Calu3 (cell line): ENCODE measurements at regions of chr3 and their contacts with region 1.

Region 1: DNA sequence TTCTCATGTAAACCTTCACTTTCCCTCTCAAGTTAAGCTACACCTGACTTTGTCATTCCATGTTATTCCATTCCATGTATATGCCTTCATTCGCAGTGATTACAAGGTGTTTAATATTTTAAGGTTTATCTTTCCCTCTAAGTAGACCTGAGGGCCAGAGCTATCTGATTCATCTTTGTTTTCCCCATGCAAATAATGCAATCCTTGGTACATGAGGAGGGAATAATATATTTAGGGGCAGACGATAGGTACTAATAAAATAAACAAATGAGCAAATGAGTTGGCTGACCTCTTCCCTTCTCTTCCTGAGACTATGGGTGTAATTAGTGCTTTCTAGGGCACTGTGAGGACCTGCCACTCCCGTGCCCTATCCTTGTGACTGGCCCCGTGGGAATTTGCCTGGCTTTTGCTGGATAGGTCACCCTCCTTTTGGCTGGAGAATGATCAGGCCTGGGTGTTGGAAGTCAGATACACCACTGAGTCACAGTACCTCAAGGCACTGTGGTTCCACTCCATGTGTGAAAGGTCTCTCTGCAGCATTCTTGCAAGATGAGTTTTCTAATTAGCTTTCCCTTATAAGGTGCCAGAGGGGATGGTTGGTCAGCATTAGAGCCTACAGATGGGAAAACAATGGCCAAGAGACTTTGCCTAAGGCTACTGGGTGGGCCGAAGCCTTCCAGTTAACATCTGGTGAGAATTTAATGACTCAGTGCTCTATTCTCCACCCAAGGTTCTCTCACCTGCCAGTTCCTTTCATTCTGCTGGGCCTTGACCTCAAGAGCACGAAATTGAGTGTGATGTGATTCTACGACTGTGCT is 183.2 kb downstream of the P3H2 start:
- DNase-seq: peak; percentile 84
- H3K4me3 Mint-ChIP-seq: peak overlapping the region; percentile 16
- H3K27ac Mint-ChIP-seq: peak overlapping the region; percentile 85
- H3K4me1 Mint-ChIP-seq: peaks cover 57% of the 10 kb centered on the region
- H3K27me3 Mint-ChIP-seq: no peaks in the 10 kb centered on the region
- CTCF ChIP-seq: no peak

Region 2: GRCh38 chr3:189605717-189606116 is 331.8 kb before region 1 on chr3:
- CTCF ChIA-PET with region 1: interaction called, 10 read pairs
- intact Hi-C with region 1: no loop called
- DNase-seq: no peak
- H3K4me3 Mint-ChIP-seq: no peak overlapping the region
- H3K27ac Mint-ChIP-seq: no peak overlapping the region
- H3K4me1 Mint-ChIP-seq: no peaks in the 10 kb centered on the region
- H3K27me3 Mint-ChIP-seq: no peaks in the 10 kb centered on the region
- CTCF ChIP-seq: no peak

Region 3: DNA sequence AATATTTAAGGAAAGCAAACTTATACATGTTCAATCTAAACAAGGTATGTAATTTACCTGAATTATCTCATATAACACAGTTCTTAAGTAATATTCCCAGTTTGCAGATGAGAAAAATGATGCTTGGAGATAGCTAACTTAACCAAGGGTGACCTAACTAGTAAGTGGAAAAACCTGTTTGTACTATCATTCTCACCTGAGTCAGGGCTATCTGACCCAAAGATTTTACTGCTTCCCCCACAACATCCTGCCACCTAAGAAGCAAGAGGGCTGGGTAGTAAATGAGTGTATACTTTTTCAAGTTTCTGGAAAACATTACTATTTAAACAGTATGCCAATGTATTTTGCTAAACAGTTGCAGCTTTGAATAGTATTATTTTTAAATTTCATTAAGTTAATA is 295.7 kb before region 1 on chr3:
- CTCF ChIA-PET with region 1: no interaction called
- intact Hi-C with region 1: loop called (anchors 5 kb)
- DNase-seq: no peak
- H3K4me3 Mint-ChIP-seq: no peak overlapping the region
- H3K27ac Mint-ChIP-seq: no peak overlapping the region
- H3K4me1 Mint-ChIP-seq: no peaks in the 10 kb centered on the region
- H3K27me3 Mint-ChIP-seq: no peaks in the 10 kb centered on the region
- CTCF ChIP-seq: no peak

Region 4: GRCh38 chr3:189710620-189711402 is 226.7 kb before region 1 on chr3:
- CTCF ChIA-PET with region 1: no interaction called
- intact Hi-C with region 1: loop called (anchors 2 kb)
- DNase-seq: peak; percentile 72
- H3K4me3 Mint-ChIP-seq: no peak overlapping the region
- H3K27ac Mint-ChIP-seq: peak overlapping the region; percentile 42
- H3K4me1 Mint-ChIP-seq: peaks cover 40% of the 10 kb centered on the region
- H3K27me3 Mint-ChIP-seq: no peaks in the 10 kb centered on the region
- CTCF ChIP-seq: no peak

Region 5: DNA sequence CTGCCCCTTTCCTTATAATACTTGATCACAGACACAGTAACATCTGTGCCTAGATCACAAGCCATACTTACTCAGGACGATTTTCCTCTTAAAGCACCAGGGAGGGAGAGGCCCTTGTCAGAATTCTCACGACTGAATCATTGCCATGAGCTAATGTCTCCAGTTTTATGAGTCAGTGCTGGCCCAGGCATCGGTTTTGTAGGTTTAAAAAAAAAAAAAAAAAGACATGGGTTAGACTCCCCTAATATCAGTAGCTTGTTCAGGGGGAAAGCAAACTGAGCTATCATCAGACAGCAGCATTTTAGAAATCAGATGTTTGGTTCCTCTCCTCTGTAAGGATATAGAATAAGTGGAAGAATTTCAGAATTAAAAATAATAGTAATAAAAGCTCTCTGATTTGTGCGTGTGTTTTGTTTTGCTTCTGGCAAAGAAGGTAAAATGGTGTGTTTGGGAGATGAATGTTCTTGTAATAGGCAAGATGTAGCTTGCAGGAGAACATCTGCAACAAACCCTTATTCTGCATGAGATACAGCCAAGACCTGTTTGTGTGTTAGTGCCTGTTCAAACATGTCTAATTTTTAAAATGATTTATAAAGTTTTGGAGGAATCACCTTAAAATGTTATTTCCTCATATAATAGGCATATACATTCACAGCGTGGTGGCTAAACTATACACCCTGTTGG is 112.7 kb before region 1 on chr3:
- CTCF ChIA-PET with region 1: interaction called, 4 read pairs
- intact Hi-C with region 1: loop called (anchors 5 kb)
- DNase-seq: peak; percentile 44
- H3K4me3 Mint-ChIP-seq: no peak overlapping the region
- H3K27ac Mint-ChIP-seq: peak overlapping the region; percentile 25
- H3K4me1 Mint-ChIP-seq: peaks cover 53% of the 10 kb centered on the region
- H3K27me3 Mint-ChIP-seq: no peaks in the 10 kb centered on the region
- CTCF ChIP-seq: no peak

Region 6: DNA sequence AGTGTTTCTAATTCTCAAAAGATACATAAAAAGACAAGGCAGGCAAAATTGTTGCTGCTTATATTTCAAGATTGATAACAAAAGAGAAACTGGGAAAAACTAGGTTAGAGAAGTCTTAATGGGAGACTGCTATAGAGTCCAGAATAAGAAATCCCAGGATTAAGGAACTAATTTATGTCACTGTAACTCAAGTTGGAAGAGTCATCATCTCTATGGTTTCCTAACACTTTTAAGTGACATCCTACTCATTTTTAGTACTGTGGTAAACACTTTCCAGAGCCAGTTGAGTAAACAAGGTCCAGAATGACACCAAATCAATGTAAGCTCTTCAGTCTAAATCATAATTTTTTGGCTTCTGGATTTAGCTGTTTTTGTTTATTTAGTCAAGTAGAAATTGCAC is 458.5 kb after region 1 on chr3:
- CTCF ChIA-PET with region 1: interaction called, 10 read pairs
- intact Hi-C with region 1: no loop called
- DNase-seq: no peak
- H3K4me3 Mint-ChIP-seq: no peak overlapping the region
- H3K27ac Mint-ChIP-seq: no peak overlapping the region
- H3K4me1 Mint-ChIP-seq: no peaks in the 10 kb centered on the region
- H3K27me3 Mint-ChIP-seq: no peaks in the 10 kb centered on the region
- CTCF ChIP-seq: no peak